ENCODE measurements at regions of chr3 and their contacts with region 1.

Region 1: DNA sequence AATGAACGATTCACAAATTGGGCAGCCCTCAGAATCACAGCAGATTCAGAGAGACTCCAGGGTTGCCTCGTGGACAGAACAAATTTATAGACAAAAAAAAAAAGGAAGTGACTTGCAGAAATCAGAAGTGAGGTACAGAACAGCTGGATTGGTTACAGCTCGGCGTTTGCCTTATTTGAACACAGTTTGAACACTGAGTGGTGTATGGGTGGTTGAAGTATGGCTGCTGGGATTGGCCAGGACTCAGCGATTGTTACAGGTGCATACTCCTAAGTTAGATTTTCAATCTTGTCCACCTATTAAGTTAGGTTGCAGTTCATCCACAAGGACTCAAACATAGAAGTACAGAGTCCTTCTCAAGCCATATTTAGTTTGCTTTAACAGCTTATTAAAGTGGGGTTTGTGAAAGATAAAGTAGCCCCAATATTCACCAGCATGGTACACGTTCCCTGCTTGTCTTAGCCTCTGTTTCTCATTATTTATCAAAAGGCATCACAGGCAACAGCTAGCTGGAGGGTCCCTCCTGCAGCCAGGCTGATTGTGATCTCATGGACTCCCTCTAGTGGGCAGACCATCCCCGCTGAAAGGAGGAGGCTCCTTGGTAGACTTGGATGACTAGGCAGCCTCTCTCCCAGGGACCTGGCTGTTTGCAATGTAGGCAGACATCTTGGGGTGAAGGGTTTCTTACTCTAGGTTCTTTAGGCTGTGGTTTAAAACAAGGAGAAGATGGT is 17.6 kb upstream of the ALDH1L1 start:
- DNase-seq: peak; percentile 76
- H3K4me3 ChIP-seq: no peak overlapping the region
- H3K27ac ChIP-seq: no peak overlapping the region
- H3K4me1 ChIP-seq: peaks cover 8 to 9% of the 10 kb centered on the region in 2 experiments; a peak in 2 of 4 replicates
- H3K27me3 ChIP-seq: no peaks in the 10 kb centered on the region
- CTCF ChIP-seq: peak; percentile 66
- EP300 ChIP-seq: no peak
- RAD21 ChIP-seq: peak; percentile 68

Region 2: DNA sequence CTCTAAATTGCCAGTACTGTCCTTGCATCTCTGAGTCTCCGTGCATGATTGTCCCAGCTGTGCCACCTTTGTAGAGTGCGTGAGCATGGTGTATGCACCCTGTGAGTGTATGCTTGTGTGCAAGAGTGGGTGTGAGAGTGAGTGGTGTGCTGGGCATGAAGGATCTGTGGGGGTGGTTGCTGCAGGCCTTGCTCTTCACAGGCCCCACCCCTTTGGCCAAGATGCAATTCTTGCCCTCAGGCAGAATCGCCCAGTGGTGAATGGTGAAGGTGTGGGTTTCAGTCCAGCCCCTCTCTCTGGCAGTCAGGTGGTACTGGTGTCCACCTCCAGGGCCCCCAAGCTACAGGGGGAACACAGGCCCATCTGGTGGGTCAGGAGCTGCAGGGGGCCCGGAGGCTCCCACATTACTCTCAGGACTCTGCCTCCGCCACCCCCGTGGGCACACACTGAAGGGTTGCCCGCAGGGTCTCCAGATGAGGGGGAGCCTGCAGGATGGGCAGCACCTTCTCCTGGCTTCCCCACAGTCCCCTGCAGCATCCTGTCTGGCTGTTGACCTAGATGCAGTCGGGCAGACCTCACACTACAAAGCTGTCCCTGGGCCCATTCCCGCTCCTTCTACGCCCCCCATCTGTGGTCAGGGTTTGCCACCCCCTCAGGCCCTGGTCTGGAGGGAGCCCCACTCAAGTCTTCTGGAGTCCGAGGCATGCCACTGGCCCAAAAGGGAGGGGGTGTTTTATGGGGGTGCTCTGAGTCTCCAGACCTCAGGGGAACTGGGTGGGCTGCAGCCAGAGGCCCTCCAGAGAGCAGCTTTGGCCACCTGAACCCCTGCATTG is 237.3 kb before region 1 on chr3:
- CTCF ChIA-PET with region 1: no interaction called
- POLR2A ChIA-PET with region 1: no interaction called
- DNase-seq: peak; percentile 13
- H3K4me3 ChIP-seq: no peak overlapping the region
- H3K27ac ChIP-seq: no peak overlapping the region
- H3K4me1 ChIP-seq: no peaks in the 10 kb centered on the region
- H3K27me3 ChIP-seq: no peaks in the 10 kb centered on the region
- CTCF ChIP-seq: no peak
- EP300 ChIP-seq: no peak
- RAD21 ChIP-seq: no peak

Region 3: DNA sequence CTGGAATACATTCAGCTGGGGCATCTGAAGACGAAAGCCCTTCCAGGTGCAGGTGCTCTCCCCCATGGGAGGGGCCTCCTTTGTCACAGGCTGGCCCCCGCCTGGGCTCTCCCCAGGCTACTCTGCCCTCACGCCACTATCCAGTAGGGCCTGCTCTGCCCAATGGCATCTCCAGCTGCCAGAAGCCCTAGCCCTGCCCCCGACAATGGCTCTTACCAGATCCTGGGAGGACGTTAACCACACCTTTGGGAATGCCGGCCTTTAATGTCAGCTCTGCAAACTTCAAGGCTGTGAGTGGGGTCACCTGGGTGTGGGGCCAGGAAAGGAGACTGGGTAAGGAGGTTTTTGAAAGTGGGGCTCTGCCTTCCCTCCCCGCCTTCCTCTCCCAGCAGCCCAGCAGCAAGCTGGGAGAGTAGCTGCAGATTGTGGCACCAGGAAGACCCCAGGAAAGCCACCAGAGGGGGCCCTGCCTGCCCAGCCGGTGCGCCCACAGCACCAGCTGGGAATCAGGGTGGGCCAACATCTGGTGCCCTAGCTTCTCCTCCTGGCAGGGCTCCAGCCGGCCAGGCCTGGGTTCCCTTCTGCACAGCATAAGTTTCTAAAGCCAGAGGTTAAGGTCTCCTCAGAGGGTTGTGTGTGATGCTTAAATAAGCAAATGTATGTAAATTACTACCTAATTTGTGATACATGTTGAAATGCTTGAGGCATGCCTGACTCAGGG is 73.7 kb before region 1 on chr3:
- CTCF ChIA-PET with region 1: interaction called, 16 read pairs
- POLR2A ChIA-PET with region 1: no interaction called
- DNase-seq: peak; percentile 83
- H3K4me3 ChIP-seq: no peak overlapping the region
- H3K27ac ChIP-seq: no peak overlapping the region
- H3K4me1 ChIP-seq: peaks cover 0 to 22% of the 10 kb centered on the region in 2 experiments; a peak in 1 of 4 replicates
- H3K27me3 ChIP-seq: no peaks in the 10 kb centered on the region
- CTCF ChIP-seq: no peak
- EP300 ChIP-seq: no peak
- RAD21 ChIP-seq: peak; percentile 23; the same call in 1 of the 2 replicates

Region 4: DNA sequence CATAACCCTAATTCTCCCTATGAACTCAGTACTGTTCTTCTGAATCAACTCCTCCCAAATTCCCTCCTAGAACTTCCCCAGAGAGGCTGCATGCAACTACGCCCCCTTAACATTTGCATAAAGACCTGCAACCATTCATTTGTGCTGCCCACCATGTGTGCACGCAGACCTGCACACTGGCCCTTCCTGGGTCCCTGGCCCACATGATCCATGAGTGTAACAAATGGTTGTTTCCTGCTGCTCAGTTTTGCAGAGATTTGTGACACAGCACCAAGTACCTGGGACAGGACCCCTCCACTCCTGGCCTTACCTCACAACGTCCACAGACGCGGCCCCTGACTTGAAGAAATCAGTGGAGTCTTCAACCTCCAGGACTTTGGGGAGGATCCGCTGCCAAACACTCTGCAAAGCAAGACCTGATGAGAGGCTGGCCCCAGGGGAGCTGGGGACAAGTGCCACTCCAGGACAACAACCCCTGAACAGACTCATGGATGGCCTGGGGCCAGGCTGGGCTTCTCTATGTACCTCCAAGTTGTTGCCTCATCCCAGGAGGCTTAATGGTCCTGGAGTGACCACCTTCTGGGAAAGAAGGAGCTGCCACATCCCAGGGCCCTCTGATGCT is 51.4 kb before region 1 on chr3:
- CTCF ChIA-PET with region 1: interaction called, 12 read pairs
- POLR2A ChIA-PET with region 1: no interaction called
- DNase-seq: no peak
- H3K4me3 ChIP-seq: no peak overlapping the region
- H3K27ac ChIP-seq: no peak overlapping the region
- H3K4me1 ChIP-seq: no peaks in the 10 kb centered on the region
- H3K27me3 ChIP-seq: peaks cover 14% of the 10 kb centered on the region; the same call in 1 of the 2 replicates
- CTCF ChIP-seq: no peak
- EP300 ChIP-seq: no peak
- RAD21 ChIP-seq: no peak

Region 5: DNA sequence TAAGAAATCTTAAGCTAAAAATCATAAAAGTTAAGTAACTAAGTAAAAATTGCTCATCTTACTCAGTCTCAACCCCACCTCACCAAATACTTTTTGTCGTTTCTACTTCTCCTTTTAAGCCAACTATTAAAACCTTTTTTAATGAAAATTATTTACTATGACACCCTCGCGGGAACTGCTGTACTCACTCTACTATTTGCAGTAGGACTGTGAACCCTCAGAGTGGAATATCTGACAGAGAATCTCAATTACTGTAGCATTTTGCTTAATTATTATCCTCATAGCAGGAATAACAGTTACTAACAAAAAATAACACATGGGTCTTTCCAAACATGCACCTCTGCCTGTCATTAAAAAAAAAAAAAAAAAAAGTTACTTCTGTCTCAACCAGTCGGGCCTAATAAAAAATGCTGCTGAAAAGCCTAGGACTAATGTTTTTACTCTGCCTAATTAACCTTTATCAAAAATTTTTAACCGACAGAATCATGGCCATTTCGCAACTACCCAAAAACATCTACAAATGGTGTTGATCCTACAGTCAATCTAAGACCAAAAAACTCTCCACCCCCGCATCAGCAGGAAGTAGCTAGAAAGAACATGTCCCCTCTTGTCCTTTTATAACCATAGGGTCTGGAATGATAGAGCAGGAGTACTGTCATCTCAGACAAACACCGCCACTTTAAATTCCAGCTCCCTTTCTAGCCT is 27.8 kb before region 1 on chr3:
- CTCF ChIA-PET with region 1: interaction called, 11 read pairs
- POLR2A ChIA-PET with region 1: no interaction called
- DNase-seq: no peak
- H3K4me3 ChIP-seq: no peak overlapping the region
- H3K27ac ChIP-seq: no peak overlapping the region
- H3K4me1 ChIP-seq: no peaks in the 10 kb centered on the region; a peak in 1 of 4 replicates
- H3K27me3 ChIP-seq: no peaks in the 10 kb centered on the region; the same call in 1 of the 2 replicates
- CTCF ChIP-seq: no peak
- EP300 ChIP-seq: no peak
- RAD21 ChIP-seq: no peak

Region 6: DNA sequence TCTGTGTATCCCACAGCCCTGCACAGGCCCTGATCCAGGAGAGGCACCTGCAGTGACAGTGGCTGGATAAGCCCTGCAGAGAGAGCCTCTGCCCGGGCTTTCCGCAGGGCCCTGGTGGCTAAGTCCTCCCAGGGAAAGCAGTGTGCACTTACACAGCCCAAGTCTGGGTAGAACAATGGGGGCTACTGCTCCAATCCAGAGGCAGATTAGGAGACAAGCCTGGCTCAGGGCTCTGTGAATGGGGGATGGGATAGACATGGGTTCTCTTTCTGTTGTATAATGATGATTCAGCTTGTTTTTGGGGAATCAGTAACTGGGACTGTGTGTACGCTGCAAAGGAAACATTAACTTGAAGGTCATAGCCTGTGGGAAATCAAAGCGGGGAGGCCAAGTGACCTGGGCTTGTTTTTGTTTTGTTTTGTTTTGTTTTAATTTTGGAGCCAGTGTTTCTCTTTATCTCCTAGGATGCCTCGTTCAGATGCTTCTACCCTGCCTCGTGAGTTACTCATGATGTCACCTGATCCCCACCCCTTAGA is 13.5 kb before region 1 on chr3:
- CTCF ChIA-PET with region 1: interaction called, 51 read pairs
- POLR2A ChIA-PET with region 1: no interaction called
- DNase-seq: no peak
- H3K4me3 ChIP-seq: no peak overlapping the region
- H3K27ac ChIP-seq: no peak overlapping the region
- H3K4me1 ChIP-seq: peaks cover 0 to 9% of the 10 kb centered on the region in 2 experiments; a peak in 1 of 4 replicates
- H3K27me3 ChIP-seq: peaks cover 54% of the 10 kb centered on the region
- CTCF ChIP-seq: no peak
- EP300 ChIP-seq: no peak
- RAD21 ChIP-seq: no peak

Region 7: GRCh38 chr3:126212602-126213378 is 14.8 kb after region 1 on chr3:
- CTCF ChIA-PET with region 1: interaction called, 30 read pairs
- POLR2A ChIA-PET with region 1: interaction called, 4 read pairs
- DNase-seq: peak; percentile 89
- H3K4me3 ChIP-seq: peak overlapping the region; percentile 10 to 46; a peak in 2 of 4 replicates
- H3K27ac ChIP-seq: no peak overlapping the region
- H3K4me1 ChIP-seq: peaks cover 13 to 18% of the 10 kb centered on the region in 2 experiments; a peak in 2 of 4 replicates
- H3K27me3 ChIP-seq: no peaks in the 10 kb centered on the region
- CTCF ChIP-seq: peak; percentile 24
- EP300 ChIP-seq: no peak
- RAD21 ChIP-seq: peak; percentile 41

Measured in SK-N-SH (cell line).